Activated T-helper 2 cell treated with anti-CD3 and anti-CD28 coated beads, Interferon-gamma antibody, Interleukin-2, Interleukin-4, amounts not matched to agents 10 μg/mL and 5 μg/mL and 100 μg/mL, durations not matched to agents 14 hours and 24 hours and 36 hours (primary cell): ENCODE measurements at regions of chr5 and their contacts with region 1.

Region 1: GRCh38 chr5:115098041-115098702 is 71.5 kb downstream of the TRIM36 start:
- DNase-seq: peak; percentile 14
- H3K4me3 Mint-ChIP-seq: no peak overlapping the region
- H3K27ac Mint-ChIP-seq: no peak overlapping the region
- H3K4me1 Mint-ChIP-seq: no peaks in the 10 kb centered on the region
- H3K27me3 Mint-ChIP-seq: peaks cover 23% of the 10 kb centered on the region

Region 2: GRCh38 chr5:115116001-115116400 is 17.8 kb after region 1 on chr5:
- intact Hi-C with region 1: no loop called
- DNase-seq: no peak
- H3K4me3 Mint-ChIP-seq: no peak overlapping the region
- H3K27ac Mint-ChIP-seq: no peak overlapping the region
- H3K4me1 Mint-ChIP-seq: no peaks in the 10 kb centered on the region
- H3K27me3 Mint-ChIP-seq: peaks cover 3% of the 10 kb centered on the region

Region 3: GRCh38 chr5:115246361-115246991 is 148.3 kb after region 1 on chr5:
- intact Hi-C with region 1: loop called (anchors 1 kb)
- DNase-seq: no peak
- H3K4me3 Mint-ChIP-seq: no peak overlapping the region
- H3K27ac Mint-ChIP-seq: no peak overlapping the region
- H3K4me1 Mint-ChIP-seq: peaks cover 12% of the 10 kb centered on the region
- H3K27me3 Mint-ChIP-seq: no peaks in the 10 kb centered on the region

Region 4: DNA sequence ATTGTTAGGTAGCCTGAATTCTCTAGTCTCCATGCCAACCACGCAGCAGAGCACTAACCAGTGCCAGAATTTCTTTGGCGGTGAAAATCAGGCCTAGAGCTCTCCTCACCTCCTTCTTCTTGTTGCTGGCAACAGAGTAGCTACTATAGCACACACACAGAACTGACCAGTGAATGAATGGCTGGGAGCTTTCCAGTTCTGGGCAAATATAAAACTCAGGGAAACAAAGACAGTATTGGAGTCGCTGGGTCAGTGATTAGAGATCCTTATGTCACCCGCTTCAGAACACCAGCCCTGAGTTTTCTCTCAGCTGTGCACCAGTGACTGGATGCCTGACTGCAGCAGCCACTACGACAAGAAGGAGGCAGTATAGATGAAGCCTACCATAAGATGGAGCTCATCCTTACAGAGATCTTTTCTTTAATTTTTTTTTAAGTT is 473.3 kb after region 1 on chr5:
- intact Hi-C with region 1: loop called (anchors 5 kb)
- DNase-seq: no peak
- H3K4me3 Mint-ChIP-seq: no peak overlapping the region
- H3K27ac Mint-ChIP-seq: no peak overlapping the region
- H3K4me1 Mint-ChIP-seq: no peaks in the 10 kb centered on the region
- H3K27me3 Mint-ChIP-seq: peaks cover 27% of the 10 kb centered on the region